K562 (cell line): ENCODE measurements at regions of chr9 and their contacts with region 1.

Region 1: GRCh38 chr9:112750111-112750767 is at the start of gene SNX30:
- DNase-seq: peak; percentile 94 to 97 (median 96)
- ATAC-seq: peak; percentile 95
- H3K4me3 ChIP-seq: peak within 1 kb of the TSS; percentile 50
- H3K27ac ChIP-seq: peak within 1 kb of the TSS; percentile 80
- H3K4me1 ChIP-seq: peaks cover 15 to 19% of the 10 kb centered on the region in 2 experiments
- H3K27me3 ChIP-seq: no peaks in the 10 kb centered on the region
- CTCF ChIP-seq: peak; percentile 21 to 39 (median 23); a peak in 3 of 6 replicates
- EP300 ChIP-seq: peak; percentile 26; the same call in 1 of the 2 replicates
- POLR2A ChIP-seq: peak; percentile 95
- RAD21 ChIP-seq: peak; percentile 18 to 30; a peak in 1 of 4 replicates
- polyA plus RNA-seq, gene SNX30: 0.76 to 0.99 TPM

Region 2: DNA sequence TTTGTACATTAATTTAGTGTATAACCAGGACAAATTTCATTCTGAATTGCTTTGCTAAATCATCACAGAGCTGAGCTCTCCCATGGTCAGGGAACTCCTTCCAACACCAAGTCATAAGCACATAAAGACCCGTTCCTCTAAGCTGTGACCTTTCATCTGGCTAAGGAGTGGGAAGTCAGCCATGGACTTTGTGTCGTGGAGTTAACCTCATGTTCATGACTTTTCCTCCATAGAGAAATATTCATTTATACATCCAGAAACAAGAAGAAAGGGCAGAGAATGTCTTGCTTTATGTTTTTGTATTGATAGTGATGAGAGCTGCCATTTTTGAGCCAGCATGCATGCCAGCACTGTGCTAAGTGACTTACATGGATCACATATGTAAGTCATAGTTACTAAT is 129.9 kb before region 1 on chr9:
- CTCF ChIA-PET with region 1: no interaction called
- POLR2A ChIA-PET with region 1: no interaction called
- in situ Hi-C with region 1: no loop called
- intact Hi-C with region 1: no loop called
- DNase-seq: no peak
- ATAC-seq: no peak
- H3K4me3 ChIP-seq: no peak overlapping the region
- H3K27ac ChIP-seq: no peak overlapping the region
- H3K4me1 ChIP-seq: no peaks in the 10 kb centered on the region; a peak in 2 of 5 replicates
- H3K27me3 ChIP-seq: no peaks in the 10 kb centered on the region
- CTCF ChIP-seq: no peak
- EP300 ChIP-seq: no peak
- POLR2A ChIP-seq: no peak
- RAD21 ChIP-seq: no peak

Region 3: DNA sequence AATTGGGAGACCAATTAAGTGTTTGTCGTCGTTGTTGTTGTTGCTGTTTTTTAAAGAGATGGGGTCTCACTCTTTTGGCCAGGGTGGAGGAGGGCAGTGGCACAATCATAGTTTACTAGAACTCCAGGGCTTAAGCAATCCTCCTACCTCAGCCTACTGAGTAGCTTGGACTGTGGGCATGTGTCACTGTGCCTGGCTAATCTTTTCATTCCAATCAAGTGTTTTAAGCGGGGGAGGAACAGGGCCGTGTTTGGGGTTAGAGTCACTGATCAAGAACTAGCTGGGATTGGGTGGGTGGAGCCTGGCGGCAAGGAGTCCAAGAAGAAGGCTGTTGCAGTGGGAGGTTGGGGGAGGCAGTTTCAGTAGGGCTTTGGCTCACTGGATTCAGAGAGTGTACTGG is 14.1 kb after region 1 on chr9:
- CTCF ChIA-PET with region 1: no interaction called
- POLR2A ChIA-PET with region 1: interaction called, 11 read pairs
- in situ Hi-C with region 1: no loop called
- intact Hi-C with region 1: no loop called
- DNase-seq: peak; percentile 48 to 75 (median 52)
- ATAC-seq: peak; percentile 77
- H3K4me3 ChIP-seq: no peak overlapping the region
- H3K27ac ChIP-seq: no peak overlapping the region
- H3K4me1 ChIP-seq: peaks cover 9 to 11% of the 10 kb centered on the region in 2 experiments; a peak in 3 of 5 replicates
- H3K27me3 ChIP-seq: no peaks in the 10 kb centered on the region
- CTCF ChIP-seq: no peak
- EP300 ChIP-seq: no peak
- POLR2A ChIP-seq: no peak
- RAD21 ChIP-seq: no peak